GM10248 (cell line): ENCODE measurements at regions of chr5 and their contacts with region 1.

Region 1: DNA sequence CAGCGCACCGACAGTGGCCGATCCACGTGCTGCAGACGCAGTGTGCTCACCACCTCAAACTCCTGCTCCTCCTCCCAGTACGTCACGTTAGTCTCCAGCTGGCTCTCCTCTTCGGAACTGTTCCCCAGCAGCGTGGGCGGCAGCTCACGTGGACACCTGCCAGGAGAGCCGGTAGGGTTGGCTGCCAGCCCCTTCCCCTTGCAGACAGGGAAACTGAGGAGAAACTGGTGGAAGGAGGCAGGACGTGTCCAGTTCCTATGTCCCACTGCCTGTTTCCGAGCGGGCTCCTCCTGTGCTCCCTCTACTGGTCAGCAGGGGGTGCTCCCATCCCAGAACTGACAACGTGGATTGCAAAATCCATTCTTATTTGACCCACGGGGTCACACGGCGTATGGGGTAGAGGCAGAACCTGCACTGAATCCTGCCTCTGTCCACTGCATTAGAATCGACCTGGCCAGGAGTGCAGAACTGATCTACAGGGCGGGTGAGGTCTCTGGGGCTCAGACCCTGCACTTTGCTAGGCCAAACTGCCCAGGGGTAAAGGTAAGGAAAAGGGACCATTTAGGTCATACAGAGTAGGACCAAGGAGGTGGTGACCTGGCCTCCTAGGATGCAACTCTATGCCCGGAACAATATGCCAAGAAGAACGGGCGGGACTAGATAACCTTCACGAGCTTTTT is 25.7 kb downstream of the PDGFRB start:
- DNase-seq: peak; percentile 86
- CTCF ChIP-seq: peak; percentile 86

Region 2: DNA sequence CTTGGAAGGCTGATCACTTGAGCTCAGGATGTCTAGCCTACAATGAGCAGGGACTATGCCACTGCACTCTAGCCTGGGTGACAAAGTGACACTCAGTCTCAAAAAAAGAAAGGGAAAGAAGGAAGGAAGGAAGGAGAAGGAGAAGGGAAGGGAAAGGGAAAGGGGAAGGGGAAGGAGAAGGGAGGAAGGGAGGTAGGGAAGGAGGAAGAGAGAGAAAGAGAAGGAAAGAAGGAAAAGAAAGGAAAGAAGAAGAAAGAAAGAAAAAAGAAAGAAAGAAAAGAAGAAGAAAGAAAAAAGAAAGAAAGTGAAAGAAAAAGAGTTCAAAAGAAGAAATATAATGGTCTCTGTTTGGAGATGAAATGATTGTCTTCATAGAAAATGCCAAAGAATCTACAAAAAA is 32.8 kb before region 1 on chr5:
- CTCF ChIA-PET with region 1: no interaction called
- POLR2A ChIA-PET with region 1: no interaction called
- DNase-seq: no peak
- CTCF ChIP-seq: no peak

Region 3: DNA sequence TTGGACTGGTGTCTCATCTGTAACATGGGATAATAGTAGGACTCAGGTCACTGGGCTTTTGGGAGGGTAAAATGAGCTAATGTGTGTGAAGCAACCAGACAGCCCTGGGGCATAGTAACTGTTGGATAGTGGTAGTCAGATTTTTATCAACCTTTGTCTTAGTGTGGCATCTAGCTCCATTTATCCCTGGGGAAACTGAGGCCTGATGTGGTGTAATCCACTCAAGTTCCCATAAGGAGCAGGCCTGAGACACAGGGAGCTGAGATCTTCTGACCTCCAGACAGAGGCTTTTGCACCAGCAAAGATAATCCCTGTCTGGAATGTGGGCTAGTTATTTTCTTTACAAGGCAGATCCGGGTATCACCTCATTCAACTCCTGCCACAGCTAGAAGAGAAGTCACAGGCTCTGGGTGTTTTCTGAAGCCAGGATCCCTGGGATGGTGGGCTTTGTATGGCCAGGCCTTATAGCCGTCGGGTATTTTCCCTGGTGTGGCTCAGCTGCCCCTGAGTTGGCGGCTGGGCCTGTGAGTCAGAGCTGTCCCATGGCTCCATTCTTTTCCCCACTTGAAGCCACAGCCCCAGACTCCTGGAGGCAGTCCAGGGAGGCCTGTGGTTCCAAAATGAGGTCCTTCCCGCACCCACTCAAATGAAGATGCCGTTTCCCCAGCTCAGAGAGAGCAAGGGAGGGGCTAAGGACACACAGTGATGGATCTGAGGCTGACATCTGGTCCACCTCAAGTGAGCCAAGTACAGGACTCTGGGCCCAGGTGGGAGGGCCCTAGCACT is 17.5 kb before region 1 on chr5:
- CTCF ChIA-PET with region 1: interaction called, 10 read pairs
- POLR2A ChIA-PET with region 1: no interaction called
- DNase-seq: no peak
- CTCF ChIP-seq: no peak

Region 4: DNA sequence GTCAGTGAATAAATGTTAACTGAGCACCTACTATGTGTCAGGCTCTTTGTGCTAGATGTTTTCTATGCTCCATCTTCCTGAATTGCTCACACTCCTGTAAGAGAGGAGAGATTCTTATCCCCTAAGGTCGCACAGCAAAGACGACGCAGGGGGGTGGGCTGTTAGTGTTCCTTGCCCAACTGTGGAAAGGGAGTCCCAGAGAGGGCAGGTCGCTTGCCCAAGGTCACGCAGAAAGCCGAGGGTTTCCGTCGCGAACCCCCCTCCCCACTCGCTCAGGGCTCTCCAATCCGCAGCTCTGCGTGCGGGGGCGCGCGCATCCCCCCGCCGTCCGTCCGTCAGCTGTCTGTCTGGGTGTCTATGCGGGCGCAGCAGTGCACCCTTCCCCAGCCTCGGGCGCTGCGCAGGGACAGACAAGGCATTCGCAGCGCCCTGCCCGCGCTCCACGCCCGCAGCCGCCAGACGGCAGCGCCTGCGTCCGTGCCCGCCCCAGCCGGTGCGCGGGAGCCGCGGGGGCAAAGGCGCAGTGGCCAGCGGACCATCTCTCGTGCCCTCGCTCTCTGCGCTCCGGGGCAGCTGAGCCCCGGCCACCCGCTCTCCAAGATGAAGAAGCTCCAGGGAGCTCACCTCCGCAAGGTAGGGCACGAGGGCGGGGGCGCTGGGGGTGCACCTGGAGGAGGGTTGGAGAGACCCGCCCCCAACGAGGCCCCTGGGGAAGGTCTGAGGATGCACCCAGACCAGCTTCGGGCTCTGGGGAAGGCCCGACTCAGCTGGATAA is 60.0 kb after region 1 on chr5 and contains the start of gene SLC6A7:
- CTCF ChIA-PET with region 1: no interaction called
- POLR2A ChIA-PET with region 1: no interaction called
- DNase-seq: no peak
- CTCF ChIP-seq: no peak